GM13976 (cell line): ENCODE measurements at regions of chr14 and their contacts with region 1.

Region 1: GRCh38 chr14:65421201-65421981 is 8.9 kb downstream of the FUT8 start:
- DNase-seq: no peak
- CTCF ChIP-seq: no peak

Region 2: GRCh38 chr14:65824285-65824977 is 403.0 kb after region 1 on chr14:
- in situ Hi-C with region 1: loop called (anchors 10 kb)
- DNase-seq: peak; percentile 75
- CTCF ChIP-seq: peak; percentile 86